Endothelial cell of umbilical vein (primary cell): ENCODE measurements at regions of chr1 and their contacts with region 1.

Region 1: GRCh38 chr1:201436393-201436792 is 14.9 kb upstream of the TNNI1 start:
- DNase-seq: no peak
- H3K4me3 ChIP-seq: no peak overlapping the region
- H3K27ac ChIP-seq: no peak overlapping the region
- H3K4me1 ChIP-seq: no peaks in the 10 kb centered on the region
- H3K27me3 ChIP-seq: peaks cover 12 to 14% of the 10 kb centered on the region in 2 experiments
- CTCF ChIP-seq: no peak
- POLR2A ChIP-seq: no peak

Region 2: GRCh38 chr1:201383647-201384405 is 52.6 kb before region 1 on chr1:
- CTCF ChIA-PET with region 1: no interaction called
- POLR2A ChIA-PET with region 1: no interaction called
- dilution Hi-C with region 1: no loop called
- intact Hi-C with region 1: no loop called
- DNase-seq: no peak
- H3K4me3 ChIP-seq: no peak overlapping the region
- H3K27ac ChIP-seq: no peak overlapping the region
- H3K4me1 ChIP-seq: no peaks in the 10 kb centered on the region
- H3K27me3 ChIP-seq: peaks cover 0 to 5% of the 10 kb centered on the region in 2 experiments
- CTCF ChIP-seq: no peak
- POLR2A ChIP-seq: no peak

Region 3: DNA sequence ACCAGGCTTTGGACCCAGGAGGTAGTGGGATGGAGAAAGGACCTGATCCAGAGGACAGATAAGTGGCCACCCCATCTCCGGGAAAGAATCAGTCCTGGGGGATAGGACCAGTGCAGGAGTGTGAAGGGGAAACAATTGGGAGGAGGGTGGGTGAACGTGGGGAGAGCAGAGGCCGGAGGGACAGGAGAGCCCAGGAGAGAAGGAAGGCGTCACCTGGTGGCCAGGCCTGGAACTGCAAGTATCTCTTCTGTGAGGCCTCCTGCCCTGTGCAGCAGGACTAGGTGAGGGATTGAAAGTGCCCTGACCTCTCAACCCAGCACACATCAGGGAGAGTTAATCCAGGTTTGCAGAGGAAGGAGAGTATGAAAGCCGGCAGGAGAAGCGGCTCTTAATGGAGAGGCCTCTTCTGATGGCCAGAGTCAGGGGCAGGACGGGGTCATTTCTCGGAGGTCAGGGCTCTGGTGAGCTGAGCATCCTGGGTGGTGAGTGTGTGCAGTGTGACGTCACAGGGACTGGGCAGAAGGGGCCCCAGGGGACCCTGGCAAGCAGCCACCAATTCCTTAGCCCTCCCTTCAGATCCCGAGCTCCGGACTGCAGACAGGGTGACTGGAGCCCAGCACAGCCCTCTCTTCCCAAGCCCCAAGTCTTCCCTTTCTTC is 28.1 kb before region 1 on chr1:
- CTCF ChIA-PET with region 1: interaction called, 10 read pairs
- POLR2A ChIA-PET with region 1: no interaction called
- dilution Hi-C with region 1: no loop called
- intact Hi-C with region 1: no loop called
- DNase-seq: peak; percentile 52
- H3K4me3 ChIP-seq: no peak overlapping the region
- H3K27ac ChIP-seq: no peak overlapping the region
- H3K4me1 ChIP-seq: no peaks in the 10 kb centered on the region
- H3K27me3 ChIP-seq: peaks cover 7 to 8% of the 10 kb centered on the region in 2 experiments
- CTCF ChIP-seq: peak; percentile 91 to 98
- POLR2A ChIP-seq: no peak

Region 4: GRCh38 chr1:201447911-201448871 is 11.8 kb after region 1 on chr1:
- CTCF ChIA-PET with region 1: interaction called, 73 read pairs
- POLR2A ChIA-PET with region 1: interaction called, 3 read pairs
- dilution Hi-C with region 1: no loop called
- intact Hi-C with region 1: no loop called
- DNase-seq: peak; percentile 57
- H3K4me3 ChIP-seq: no peak overlapping the region
- H3K27ac ChIP-seq: no peak overlapping the region
- H3K4me1 ChIP-seq: no peaks in the 10 kb centered on the region
- H3K27me3 ChIP-seq: peaks cover 0 to 2% of the 10 kb centered on the region in 2 experiments
- CTCF ChIP-seq: peak; percentile 72 to 80
- POLR2A ChIP-seq: no peak

Region 5: DNA sequence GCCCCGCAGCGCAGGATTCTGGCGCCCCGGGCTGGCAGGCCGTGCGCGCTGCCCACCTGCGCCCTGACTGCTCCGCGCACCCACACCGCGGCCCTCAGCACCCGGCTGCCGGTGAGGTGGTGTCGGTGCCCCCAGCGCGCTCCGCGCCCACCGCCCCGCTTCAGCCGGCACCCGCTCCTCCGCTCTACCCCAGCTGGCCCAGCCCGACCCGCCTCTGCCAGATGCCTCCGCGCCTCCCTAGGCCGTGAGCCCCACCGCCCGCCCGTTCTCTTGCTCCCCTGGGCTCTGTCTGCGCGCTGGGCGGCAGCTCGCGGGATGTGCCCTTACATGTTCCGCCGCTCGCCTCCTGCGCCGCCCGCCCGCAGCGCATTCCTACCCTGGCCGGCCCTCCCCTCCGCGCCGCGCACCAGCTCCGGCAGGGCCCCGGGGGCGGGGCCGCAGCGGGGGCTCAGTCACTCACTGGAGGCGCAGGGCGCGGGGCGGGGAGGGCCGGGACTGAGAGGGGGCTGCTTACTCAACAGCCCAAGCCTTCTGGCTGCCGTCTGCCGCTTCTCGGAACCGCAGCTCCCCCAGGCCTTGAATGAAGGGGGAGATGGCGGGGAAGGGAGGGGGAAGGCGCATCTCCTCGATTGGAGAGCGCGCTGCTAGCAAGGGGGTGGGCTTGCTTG is 32.6 kb after region 1 on chr1 and contains the start of gene PHLDA3:
- CTCF ChIA-PET with region 1: interaction called, 45 read pairs
- POLR2A ChIA-PET with region 1: no interaction called
- dilution Hi-C with region 1: no loop called
- intact Hi-C with region 1: no loop called
- DNase-seq: peak; percentile 86
- H3K4me3 ChIP-seq: peak within 1 kb of the TSS; percentile 13 to 85 (median 53)
- H3K27ac ChIP-seq: peak within 1 kb of the TSS; percentile 13
- H3K4me1 ChIP-seq: peaks cover 5% of the 10 kb centered on the region
- H3K27me3 ChIP-seq: peaks cover 3% of the 10 kb centered on the region in 2 experiments
- CTCF ChIP-seq: no peak
- POLR2A ChIP-seq: peak; percentile 83
- total RNA-seq, gene PHLDA3: 29.5 and 35.6 TPM in 2 replicates

Region 6: DNA sequence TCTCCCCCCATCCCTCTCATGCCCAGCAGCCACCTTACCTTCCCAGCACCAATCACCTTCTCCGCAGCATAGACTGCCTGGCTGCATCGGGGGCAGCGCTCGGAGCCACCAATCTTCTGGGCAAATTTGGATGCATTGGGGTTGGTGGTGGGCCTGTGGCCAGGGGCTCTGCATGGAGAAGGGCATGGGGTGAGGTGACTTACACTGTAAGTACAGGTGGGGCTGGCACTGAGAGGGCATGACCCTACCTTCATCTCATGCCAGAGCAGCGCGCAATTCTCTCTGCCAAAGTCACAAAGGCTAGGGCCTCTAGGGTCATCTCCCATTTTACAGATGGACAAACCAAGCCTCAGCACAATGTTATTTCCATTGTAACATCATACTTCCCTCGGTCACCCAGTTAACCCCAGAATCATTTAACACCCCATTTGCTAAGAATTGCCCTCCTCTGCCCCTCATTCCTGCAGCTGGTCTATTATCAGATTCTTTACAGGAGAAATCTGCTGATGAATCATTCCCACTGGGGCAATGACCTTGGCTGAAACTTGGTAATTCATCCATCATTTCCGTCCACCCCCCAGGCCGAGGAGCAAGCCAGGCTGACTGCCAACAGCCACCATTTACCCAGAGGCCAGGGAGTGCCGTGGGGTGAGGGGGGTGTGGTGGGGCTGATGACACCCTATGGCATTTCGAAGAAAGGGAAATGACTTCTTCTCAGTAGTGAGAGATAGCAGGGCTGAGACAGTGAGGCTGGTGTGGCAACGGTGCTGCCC is 52.6 kb after region 1 on chr1:
- CTCF ChIA-PET with region 1: interaction called, 12 read pairs
- POLR2A ChIA-PET with region 1: no interaction called
- dilution Hi-C with region 1: no loop called
- intact Hi-C with region 1: no loop called
- DNase-seq: peak; percentile 96
- H3K4me3 ChIP-seq: no peak overlapping the region
- H3K27ac ChIP-seq: peak overlapping the region; percentile 90
- H3K4me1 ChIP-seq: peaks cover 75% of the 10 kb centered on the region
- H3K27me3 ChIP-seq: no peaks in the 10 kb centered on the region
- CTCF ChIP-seq: no peak
- POLR2A ChIP-seq: peak; percentile 28

Region 7: DNA sequence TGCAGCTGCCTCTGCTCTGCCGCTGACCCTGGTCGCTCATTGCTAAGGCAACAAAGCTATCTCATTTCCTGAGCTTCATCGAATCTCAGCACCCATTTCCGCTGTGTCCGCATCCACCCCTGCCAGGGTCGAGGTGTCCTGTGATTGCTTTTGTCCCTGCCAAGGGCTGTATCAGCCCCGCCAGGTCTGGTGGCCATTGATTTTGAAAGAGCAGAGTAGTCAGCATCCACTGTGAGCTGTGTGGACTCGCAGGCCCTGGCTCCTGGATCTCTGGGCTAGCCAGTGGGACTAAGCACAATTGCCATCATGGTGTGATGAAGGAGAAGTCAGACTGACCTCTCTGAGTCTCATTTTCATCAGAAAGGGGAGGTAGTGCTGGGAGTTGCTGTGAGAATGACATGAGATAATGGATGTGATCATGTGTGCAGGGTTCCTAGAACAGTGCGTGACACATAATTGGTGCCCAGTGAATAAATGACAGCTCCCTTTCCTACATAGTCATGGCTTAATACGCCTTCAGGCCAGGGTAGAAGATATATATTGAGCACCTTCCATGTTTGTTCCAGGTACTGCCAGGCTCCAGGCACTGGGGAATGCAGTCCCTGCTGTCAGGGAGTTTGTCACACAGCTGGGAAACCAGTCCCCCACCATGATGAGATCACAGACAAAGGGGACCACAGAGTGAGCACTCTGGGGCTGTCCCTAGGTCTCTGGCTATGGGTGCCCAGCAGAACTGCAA is 134.7 kb after region 1 on chr1:
- CTCF ChIA-PET with region 1: no interaction called
- POLR2A ChIA-PET with region 1: no interaction called
- dilution Hi-C with region 1: no loop called
- intact Hi-C with region 1: no loop called
- DNase-seq: peak; percentile 36
- H3K4me3 ChIP-seq: no peak overlapping the region
- H3K27ac ChIP-seq: no peak overlapping the region
- H3K4me1 ChIP-seq: peaks cover 22% of the 10 kb centered on the region
- H3K27me3 ChIP-seq: no peaks in the 10 kb centered on the region
- CTCF ChIP-seq: no peak
- POLR2A ChIP-seq: no peak

Region 8: DNA sequence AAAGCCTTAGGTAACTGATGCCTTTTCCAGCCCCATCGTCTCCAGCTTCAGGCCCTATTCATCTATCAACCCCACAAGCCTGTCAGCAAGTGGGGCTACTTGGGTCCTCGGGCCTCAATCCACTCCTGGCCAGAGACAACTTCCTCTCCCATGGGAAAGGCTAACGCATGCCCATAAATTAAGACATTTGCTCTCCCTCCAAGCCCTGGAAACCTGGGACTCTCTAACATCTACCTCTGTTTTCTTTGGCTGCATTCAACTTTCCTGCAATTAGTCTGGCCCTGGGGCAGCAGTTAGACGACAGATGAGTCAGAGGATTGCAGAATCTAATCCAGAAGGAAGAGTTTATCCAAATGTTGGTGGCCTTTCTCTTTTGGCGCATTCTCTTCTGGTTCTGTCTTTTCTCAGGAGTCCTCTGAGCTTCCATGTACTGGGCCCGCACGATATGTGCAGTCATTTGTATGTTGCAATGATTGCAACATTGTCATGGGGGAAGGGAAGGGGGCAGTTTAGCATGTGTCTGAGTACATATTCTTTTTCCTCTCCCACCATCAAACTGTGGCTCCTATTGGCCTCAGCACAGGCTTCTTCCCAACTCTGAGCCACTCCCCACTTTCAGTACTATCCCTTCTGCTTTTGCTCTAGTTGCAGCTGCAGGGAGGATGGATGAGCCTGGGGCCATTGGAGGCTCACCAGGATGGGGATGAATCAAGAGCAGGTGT is 157.0 kb after region 1 on chr1:
- CTCF ChIA-PET with region 1: no interaction called
- POLR2A ChIA-PET with region 1: no interaction called
- dilution Hi-C with region 1: no loop called
- intact Hi-C with region 1: no loop called
- DNase-seq: peak; percentile 85
- H3K4me3 ChIP-seq: no peak overlapping the region
- H3K27ac ChIP-seq: no peak overlapping the region
- H3K4me1 ChIP-seq: peaks cover 36% of the 10 kb centered on the region
- H3K27me3 ChIP-seq: no peaks in the 10 kb centered on the region
- CTCF ChIP-seq: no peak
- POLR2A ChIP-seq: no peak